ENCODE measurements at regions of chr6 and their contacts with region 1.

Region 1: DNA sequence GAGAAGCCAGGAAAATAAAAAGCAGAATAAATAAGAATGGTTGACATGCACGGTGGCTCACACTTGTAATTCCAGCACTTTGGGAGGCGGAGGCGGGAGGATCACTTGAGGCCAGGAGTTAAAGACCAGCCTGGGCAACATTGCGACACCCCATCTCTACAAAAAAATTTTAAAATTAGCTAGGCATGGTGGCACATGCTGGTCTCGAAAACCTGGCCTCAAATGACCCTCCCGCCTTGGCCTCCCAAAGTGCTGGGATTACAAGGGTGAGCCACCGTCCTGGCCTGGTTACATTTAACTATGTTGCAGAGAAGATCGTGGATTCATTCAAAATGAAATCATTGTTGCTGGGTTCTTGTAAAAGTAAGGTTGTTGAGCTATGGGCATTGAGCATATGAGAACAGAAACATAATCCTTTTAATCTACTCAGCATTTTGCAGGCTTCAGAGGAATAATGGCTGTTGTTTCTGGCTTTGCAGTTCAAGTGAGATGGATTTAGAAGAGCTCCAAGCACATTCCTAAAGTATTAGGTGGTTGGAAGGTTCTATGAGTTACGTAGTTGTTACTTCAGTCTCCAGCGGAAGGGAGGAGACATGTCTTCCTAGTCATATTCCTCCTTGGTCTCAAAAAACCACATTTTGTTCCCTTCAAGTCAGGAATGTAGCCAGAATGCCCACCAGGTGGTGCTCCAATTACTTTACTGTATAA is 45.6 kb upstream of the RAB23 start:
- DNase-seq: peak; percentile 38
- ATAC-seq: no peak
- H3K4me3 ChIP-seq: no peak overlapping the region
- H3K4me3 Mint-ChIP-seq: no peak overlapping the region
- H3K27ac ChIP-seq: no peak overlapping the region
- H3K27ac Mint-ChIP-seq: no peak overlapping the region
- H3K4me1 ChIP-seq: no peaks in the 10 kb centered on the region
- H3K4me1 Mint-ChIP-seq: no peaks in the 10 kb centered on the region
- H3K27me3 ChIP-seq: no peaks in the 10 kb centered on the region
- H3K27me3 Mint-ChIP-seq: peaks cover 9% of the 10 kb centered on the region
- CTCF ChIP-seq: peak; percentile 60

Region 2: GRCh38 chr6:57324538-57324937 is 56.8 kb after region 1 on chr6:
- CTCF ChIA-PET with region 1: interaction called, 31 read pairs
- POLR2A ChIA-PET with region 1: no interaction called
- intact Hi-C with region 1: loop called (anchors 1 kb)
- DNase-seq: peak; percentile 20
- ATAC-seq: no peak
- H3K4me3 ChIP-seq: no peak overlapping the region
- H3K4me3 Mint-ChIP-seq: no peak overlapping the region
- H3K27ac ChIP-seq: no peak overlapping the region
- H3K27ac Mint-ChIP-seq: no peak overlapping the region
- H3K4me1 ChIP-seq: no peaks in the 10 kb centered on the region
- H3K4me1 Mint-ChIP-seq: peaks cover 3% of the 10 kb centered on the region
- H3K27me3 ChIP-seq: no peaks in the 10 kb centered on the region
- H3K27me3 Mint-ChIP-seq: no peaks in the 10 kb centered on the region
- CTCF ChIP-seq: peak; percentile 56

Measured in B cell (primary cell).